Endothelial cell of umbilical vein (primary cell): ENCODE measurements at regions of chr9 and their contacts with region 1.

Region 1: DNA sequence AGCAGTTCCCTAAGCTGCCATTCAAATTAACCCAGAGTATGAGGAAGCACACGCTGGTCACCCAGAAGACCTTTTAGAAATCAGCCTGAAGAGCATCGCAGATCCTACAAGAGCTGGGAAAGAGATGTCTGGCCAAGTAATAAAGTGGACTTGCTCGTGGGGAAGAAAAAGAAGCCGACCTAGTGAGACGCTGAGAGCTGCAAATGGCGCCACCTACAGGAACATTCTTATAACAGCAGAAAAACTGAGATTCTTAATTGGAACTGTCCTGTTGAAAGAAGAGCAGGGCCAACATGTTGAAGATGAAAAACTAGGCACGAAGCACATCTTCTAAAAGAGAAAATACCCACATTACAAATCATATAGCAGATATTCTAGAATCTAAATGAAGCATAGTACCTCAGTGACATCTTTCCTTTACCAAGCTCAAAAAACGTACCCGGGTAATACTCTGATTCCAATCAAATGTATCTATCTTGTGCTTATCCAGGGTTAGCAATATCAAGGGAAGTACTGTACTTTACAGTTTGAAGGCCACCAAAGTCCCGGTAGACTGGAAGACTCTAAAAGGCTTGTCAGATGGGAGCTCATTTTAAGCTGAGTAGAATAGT is 3.9 kb upstream of the GNAQ start:
- DNase-seq: peak; percentile 88
- H3K4me3 ChIP-seq: no peak overlapping the region
- H3K27ac ChIP-seq: no peak overlapping the region
- H3K4me1 ChIP-seq: peaks cover 38% of the 10 kb centered on the region
- H3K27me3 ChIP-seq: no peaks in the 10 kb centered on the region
- CTCF ChIP-seq: peak; percentile 69 to 74
- POLR2A ChIP-seq: no peak

Region 2: GRCh38 chr9:77177161-77177893 is 858.2 kb before region 1 on chr9 and contains the start of gene VPS13A:
- CTCF ChIA-PET with region 1: no interaction called
- POLR2A ChIA-PET with region 1: no interaction called
- dilution Hi-C with region 1: no loop called
- intact Hi-C with region 1: loop called (anchors 10 kb)
- DNase-seq: peak; percentile 91
- H3K4me3 ChIP-seq: peak within 1 kb of the TSS; percentile 86 to 91 (median 87)
- H3K27ac ChIP-seq: peak within 1 kb of the TSS; percentile 44
- H3K4me1 ChIP-seq: peaks cover 12% of the 10 kb centered on the region
- H3K27me3 ChIP-seq: peaks cover 3% of the 10 kb centered on the region in 2 experiments
- CTCF ChIP-seq: peak; percentile 18 to 50
- POLR2A ChIP-seq: peak; percentile 40
- total RNA-seq, gene VPS13A: 29.8 and 33.3 TPM in 2 replicates

Region 3: DNA sequence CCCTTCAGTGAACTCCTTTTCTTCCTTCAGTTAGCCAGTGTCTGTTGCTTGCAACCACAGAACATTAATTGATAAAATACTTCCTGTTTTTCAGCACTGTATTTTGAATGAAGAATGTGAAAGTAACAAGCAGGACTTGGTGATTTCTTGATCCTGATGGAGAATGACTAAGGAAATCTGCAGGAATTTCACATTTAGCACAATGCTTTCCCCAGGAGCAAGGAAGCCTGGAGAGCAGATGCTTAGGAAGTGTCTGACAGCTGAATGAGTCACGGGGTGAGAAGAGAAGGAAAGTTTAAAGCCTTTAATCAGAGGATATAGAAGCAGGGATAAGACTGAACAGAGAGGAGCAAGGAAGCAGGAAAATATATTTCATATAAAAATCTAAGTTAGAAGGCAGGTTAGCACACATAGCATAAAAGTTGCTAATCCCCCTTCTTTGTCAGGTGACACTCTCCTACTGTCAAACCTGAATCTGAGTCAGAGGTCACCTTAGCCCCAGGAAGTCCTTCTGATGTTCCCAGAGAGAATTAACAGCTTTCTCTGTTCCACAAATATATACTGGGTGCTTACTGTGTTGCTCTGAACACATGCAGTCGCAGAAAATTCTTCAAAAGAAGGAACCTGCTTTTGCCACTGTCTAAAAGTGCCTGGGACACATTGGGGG is 447.1 kb before region 1 on chr9:
- CTCF ChIA-PET with region 1: no interaction called
- POLR2A ChIA-PET with region 1: no interaction called
- dilution Hi-C with region 1: no loop called
- intact Hi-C with region 1: loop called (anchors 10 kb)
- DNase-seq: peak; percentile 92
- H3K4me3 ChIP-seq: peak overlapping the region in 1 of 3 experiments; percentile 24
- H3K27ac ChIP-seq: peak overlapping the region; percentile 93
- H3K4me1 ChIP-seq: peaks cover 35% of the 10 kb centered on the region
- H3K27me3 ChIP-seq: no peaks in the 10 kb centered on the region
- CTCF ChIP-seq: no peak
- POLR2A ChIP-seq: no peak

Region 4: DNA sequence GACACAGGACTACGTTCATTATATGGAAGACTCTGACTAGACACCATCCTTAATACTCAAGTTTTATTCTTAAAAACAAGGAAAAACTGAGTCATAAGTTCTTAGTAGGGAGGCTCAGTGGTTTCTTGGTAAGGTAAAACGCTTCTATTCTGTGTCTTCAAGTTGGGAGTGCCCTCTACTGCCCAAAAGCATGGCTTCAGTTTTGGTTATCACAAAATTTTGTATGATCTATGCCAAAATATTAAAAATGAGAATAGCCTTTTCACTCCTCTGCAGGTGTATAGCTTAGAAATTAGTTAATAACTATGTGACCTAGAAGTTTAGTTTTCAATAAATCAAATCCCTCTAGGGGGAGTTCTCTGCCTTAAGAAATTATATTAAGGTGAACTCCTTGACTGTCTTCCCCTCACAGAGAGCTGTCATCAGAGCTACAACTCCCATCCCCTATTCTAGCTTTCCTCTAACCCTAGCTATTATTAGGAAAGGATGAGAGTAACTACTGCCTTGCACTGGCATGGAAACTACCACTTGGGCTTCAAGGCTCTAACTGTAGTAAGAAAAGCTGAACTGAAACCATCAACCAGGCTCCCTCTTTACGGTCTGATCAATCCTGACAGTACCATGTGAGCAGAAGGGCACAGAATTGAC is 193.6 kb before region 1 on chr9:
- CTCF ChIA-PET with region 1: interaction called, 35 read pairs
- POLR2A ChIA-PET with region 1: no interaction called
- dilution Hi-C with region 1: no loop called
- intact Hi-C with region 1: loop called (anchors 2 kb)
- DNase-seq: peak; percentile 38
- H3K4me3 ChIP-seq: no peak overlapping the region
- H3K27ac ChIP-seq: no peak overlapping the region
- H3K4me1 ChIP-seq: peaks cover 73% of the 10 kb centered on the region
- H3K27me3 ChIP-seq: no peaks in the 10 kb centered on the region
- CTCF ChIP-seq: peak; percentile 12 to 26
- POLR2A ChIP-seq: no peak

Region 5: GRCh38 chr9:77916410-77916819 is 119.1 kb before region 1 on chr9:
- CTCF ChIA-PET with region 1: interaction called, 4 read pairs
- POLR2A ChIA-PET with region 1: no interaction called
- dilution Hi-C with region 1: no loop called
- intact Hi-C with region 1: loop called (anchors 5 kb)
- DNase-seq: peak; percentile 67
- H3K4me3 ChIP-seq: no peak overlapping the region
- H3K27ac ChIP-seq: no peak overlapping the region
- H3K4me1 ChIP-seq: peaks cover 6% of the 10 kb centered on the region
- H3K27me3 ChIP-seq: no peaks in the 10 kb centered on the region
- CTCF ChIP-seq: no peak
- POLR2A ChIP-seq: no peak

Region 6: DNA sequence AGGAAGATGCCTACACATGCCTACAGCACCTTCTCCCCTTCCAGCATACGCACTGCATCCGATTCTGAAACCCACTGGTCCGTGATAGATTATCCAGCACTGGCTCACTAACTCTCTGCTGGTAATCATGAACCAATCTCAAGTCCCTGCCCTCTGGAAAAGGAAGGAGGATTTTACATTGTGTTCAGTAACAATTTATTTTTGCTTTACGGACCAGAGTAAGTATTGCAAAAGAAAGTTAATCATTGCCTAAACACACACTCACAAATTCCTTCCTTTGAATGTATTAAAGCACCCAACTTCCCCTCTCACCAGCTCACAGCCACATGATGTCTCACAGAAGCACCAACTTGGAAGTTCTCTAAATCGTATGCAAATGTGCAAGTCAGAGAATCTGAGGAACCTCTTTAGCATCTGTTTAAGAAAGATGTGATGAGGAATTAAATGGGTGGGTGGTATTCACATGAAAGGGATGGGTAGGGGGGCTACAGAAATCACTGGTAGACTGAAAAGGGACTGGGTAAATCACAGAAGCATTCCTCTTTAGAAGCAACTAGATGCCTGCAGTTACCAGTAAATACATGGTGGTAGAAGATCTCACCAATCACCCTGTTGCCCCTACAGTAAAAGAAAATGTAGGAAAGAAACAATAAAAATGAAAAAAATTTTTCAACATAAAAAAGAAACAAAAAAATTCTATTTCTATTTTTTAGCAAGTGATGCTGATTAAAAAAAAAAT is 12.3 kb before region 1 on chr9:
- CTCF ChIA-PET with region 1: interaction called, 16 read pairs
- POLR2A ChIA-PET with region 1: interaction called, 3 read pairs
- dilution Hi-C with region 1: no loop called
- intact Hi-C with region 1: loop called (anchors 1 kb)
- DNase-seq: peak; percentile 64
- H3K4me3 ChIP-seq: peak overlapping the region in 1 of 3 experiments; percentile 13
- H3K27ac ChIP-seq: peak overlapping the region; percentile 36
- H3K4me1 ChIP-seq: peaks cover 58% of the 10 kb centered on the region
- H3K27me3 ChIP-seq: no peaks in the 10 kb centered on the region
- CTCF ChIP-seq: no peak
- POLR2A ChIP-seq: no peak